CD14-positive monocyte (primary cell): ENCODE measurements at regions of chr3 and their contacts with region 1.

Region 1: DNA sequence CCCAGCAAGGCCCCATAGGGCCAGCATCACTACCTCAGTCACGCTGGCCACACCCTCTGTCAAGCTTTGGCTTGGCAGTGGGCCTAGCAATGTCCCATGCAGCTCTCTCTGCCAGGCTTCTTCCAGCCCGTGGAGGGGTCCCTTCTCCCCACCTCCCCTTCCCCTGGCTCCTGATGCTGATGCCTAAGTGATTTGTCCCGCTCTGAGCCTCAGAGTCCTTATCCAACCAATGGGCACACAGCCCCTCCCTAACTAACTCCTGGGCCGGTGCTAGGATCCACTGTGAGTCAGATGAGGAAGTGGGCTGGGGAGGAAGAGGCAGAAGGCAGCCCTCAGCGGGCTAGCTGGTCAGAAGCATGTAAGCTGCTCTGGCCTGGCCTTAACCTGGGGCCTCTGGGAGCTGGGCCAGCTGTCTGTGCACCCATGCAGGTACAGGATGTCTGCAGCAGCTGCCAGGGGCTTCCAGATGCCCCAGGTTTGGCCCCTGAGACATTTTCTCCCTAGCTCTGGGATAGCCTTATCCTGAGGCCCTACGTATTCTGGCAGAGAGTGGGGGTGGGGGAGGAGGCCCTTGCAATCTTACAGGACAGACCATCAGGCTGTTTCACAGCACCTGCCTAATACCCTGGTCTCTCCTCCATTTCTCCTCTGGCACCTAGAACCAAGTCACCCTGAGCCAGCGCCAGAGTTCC is 740 bp upstream of the ZBTB47 start:
- DNase-seq: peak; percentile 81 to 88 (median 87)
- H3K4me3 ChIP-seq: peak overlapping the region; percentile 62 to 98 (median 92)
- H3K4me3 Mint-ChIP-seq: peak overlapping the region; percentile 93 to 96
- H3K27ac ChIP-seq: peak overlapping the region; percentile 84 to 87
- H3K27ac Mint-ChIP-seq: peak overlapping the region; percentile 89 to 96 (median 94)
- H3K4me1 ChIP-seq: peaks cover 40 to 54% of the 10 kb centered on the region in 2 donors
- H3K4me1 Mint-ChIP-seq: peaks cover 63% of the 10 kb centered on the region
- H3K27me3 ChIP-seq: no peaks in the 10 kb centered on the region
- H3K27me3 Mint-ChIP-seq: no peaks in the 10 kb centered on the region
- CTCF ChIP-seq: no peak

Region 2: DNA sequence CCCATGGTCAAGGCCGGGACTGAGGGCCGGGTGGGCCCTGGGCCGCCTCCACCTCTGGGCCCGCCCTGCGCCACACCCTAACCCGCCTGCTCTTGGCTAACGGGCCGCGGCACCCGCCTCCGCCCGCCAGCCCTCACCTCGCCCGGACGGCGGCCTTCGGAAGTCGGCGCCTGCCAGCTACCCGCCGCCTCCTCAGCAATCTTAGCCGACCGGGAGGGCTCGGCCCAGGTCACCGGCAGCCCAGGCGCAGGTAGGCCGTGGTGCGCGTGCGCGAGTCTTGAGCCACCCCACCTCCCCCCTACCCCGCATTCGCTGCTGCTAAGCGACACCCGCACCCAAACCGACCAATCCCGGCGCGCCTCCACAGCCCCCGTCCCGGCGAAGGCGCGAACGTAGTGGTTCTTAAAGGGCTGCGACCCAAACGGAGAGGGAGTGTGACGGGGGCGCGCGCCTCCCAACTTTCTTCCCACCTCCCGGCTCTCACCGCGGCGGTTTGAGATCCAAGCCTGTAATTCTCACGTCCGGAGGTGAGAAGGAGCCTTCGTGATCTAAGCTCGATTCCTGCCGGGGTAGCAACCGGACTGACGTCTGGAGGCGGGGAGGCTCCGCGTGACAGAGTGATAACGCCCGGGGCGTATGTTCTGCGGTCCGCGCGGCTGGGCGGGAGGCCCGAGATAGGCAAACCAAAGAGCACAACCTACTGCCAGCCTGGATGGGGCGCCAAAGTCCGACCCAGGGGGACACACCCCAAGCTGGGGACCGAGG is 70.9 kb before region 1 on chr3 and contains the start of gene SEC22C:
- intact Hi-C with region 1: loop called in 1 of 2 experiments (anchors 10 kb)
- DNase-seq: peak; percentile 79 to 84 (median 83)
- H3K4me3 ChIP-seq: peak within 1 kb of the TSS; percentile 66 to 85 (median 74)
- H3K4me3 Mint-ChIP-seq: peak within 1 kb of the TSS; percentile 88 to 91
- H3K27ac ChIP-seq: peak within 1 kb of the TSS; percentile 70 to 85
- H3K27ac Mint-ChIP-seq: peak within 1 kb of the TSS; percentile 85 to 98 (median 95)
- H3K4me1 ChIP-seq: peaks cover 15 to 25% of the 10 kb centered on the region in 2 donors
- H3K4me1 Mint-ChIP-seq: peaks cover 28% of the 10 kb centered on the region
- H3K27me3 ChIP-seq: no peaks in the 10 kb centered on the region
- H3K27me3 Mint-ChIP-seq: peaks cover 0 to 4% (median 0%) of the 10 kb centered on the region in 3 donors
- CTCF ChIP-seq: peak; percentile 42
- polyA plus RNA-seq, gene SEC22C: 15.3 to 28.4 (median 27.4) TPM